H1 (cell line): ENCODE measurements at regions of chr10 and their contacts with region 1.

Region 1: GRCh38 chr10:84590327-84591193 is 262.2 kb downstream of the CCSER2 start:
- DNase-seq: peak in 1 of 2 experiments; percentile 32
- H3K4me3 ChIP-seq: no peak overlapping the region
- H3K27ac ChIP-seq: no peak overlapping the region
- H3K4me1 ChIP-seq: peaks cover 0 to 12% (median 10%) of the 10 kb centered on the region in 4 experiments; a peak in 5 of 7 replicates
- H3K27me3 ChIP-seq: peaks cover 0 to 3% (median 0%) of the 10 kb centered on the region in 4 experiments; a peak in 1 of 7 replicates
- CTCF ChIP-seq: no peak
- EP300 ChIP-seq: no peak
- POLR2A ChIP-seq: no peak
- RAD21 ChIP-seq: no peak

Region 2: DNA sequence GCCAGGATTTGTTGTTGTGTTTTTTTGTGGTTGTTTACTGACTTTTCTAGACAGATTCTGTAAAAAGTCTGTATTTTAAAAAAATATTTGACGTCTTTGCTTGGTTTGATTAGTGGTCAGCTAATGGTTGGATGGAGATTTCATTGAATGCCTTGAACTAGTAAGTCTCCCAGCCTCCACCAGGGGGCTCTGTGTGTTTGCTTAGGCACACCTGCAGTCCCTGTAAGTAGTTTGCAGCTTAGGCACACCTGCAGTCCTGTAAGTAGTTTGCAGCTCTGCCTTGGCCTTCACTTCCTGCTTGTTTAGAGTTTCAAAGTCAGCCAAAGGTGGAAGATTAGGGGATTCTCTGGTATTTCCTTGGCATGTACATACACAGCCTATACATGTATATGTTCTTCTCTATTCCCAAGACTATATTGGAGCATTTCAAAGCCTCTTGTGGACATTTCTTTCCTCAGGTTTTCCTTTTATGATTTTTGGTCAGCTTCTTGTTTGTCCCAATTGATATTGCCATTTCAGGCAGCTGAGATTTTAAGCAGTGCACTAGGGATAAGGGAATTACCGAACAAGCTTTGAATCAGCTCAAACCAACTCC is 160.5 kb before region 1 on chr10:
- CTCF ChIA-PET with region 1: no interaction called
- POLR2A ChIA-PET with region 1: no interaction called
- DNase-seq: peak; percentile 60 to 87
- H3K4me3 ChIP-seq: no peak overlapping the region
- H3K27ac ChIP-seq: no peak overlapping the region
- H3K4me1 ChIP-seq: no peaks in the 10 kb centered on the region
- H3K27me3 ChIP-seq: no peaks in the 10 kb centered on the region
- CTCF ChIP-seq: peak; percentile 66 to 93 (median 91)
- EP300 ChIP-seq: 0 out of 3 replicates have a peak, but pooled peaks of 1 of the 2 experiments have one; percentile 30
- POLR2A ChIP-seq: no peak
- RAD21 ChIP-seq: peak; percentile 82 to 86

Region 3: DNA sequence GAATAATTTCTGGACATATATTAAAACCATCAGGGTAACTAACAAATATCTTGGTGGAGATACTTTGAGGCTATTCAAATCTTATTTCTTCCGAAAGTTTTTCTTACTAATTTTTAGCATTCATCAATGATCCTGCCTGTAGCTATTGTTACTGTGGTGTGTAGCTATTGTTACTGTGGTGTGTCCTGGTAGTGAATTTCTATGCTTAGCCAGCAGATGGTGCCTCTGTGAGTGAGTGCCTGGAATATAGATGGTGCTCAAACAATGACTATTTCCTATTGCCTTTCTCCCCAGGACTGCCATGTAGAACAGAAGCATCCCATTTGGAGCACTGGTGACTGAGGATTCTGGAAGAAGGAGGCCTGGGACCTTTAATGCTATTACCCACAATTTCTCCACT is 16.5 kb before region 1 on chr10:
- CTCF ChIA-PET with region 1: interaction called, 72 read pairs
- POLR2A ChIA-PET with region 1: no interaction called
- DNase-seq: no peak
- H3K4me3 ChIP-seq: no peak overlapping the region
- H3K27ac ChIP-seq: no peak overlapping the region
- H3K4me1 ChIP-seq: no peaks in the 10 kb centered on the region; a peak in 1 of 7 replicates
- H3K27me3 ChIP-seq: no peaks in the 10 kb centered on the region
- CTCF ChIP-seq: peak in 2 of 3 experiments; percentile 49 to 60; a peak in 3 of 4 replicates
- EP300 ChIP-seq: no peak
- POLR2A ChIP-seq: no peak
- RAD21 ChIP-seq: peak; percentile 38 to 46